ENCODE measurements at regions of chr4 and their contacts with region 1.

Region 1: DNA sequence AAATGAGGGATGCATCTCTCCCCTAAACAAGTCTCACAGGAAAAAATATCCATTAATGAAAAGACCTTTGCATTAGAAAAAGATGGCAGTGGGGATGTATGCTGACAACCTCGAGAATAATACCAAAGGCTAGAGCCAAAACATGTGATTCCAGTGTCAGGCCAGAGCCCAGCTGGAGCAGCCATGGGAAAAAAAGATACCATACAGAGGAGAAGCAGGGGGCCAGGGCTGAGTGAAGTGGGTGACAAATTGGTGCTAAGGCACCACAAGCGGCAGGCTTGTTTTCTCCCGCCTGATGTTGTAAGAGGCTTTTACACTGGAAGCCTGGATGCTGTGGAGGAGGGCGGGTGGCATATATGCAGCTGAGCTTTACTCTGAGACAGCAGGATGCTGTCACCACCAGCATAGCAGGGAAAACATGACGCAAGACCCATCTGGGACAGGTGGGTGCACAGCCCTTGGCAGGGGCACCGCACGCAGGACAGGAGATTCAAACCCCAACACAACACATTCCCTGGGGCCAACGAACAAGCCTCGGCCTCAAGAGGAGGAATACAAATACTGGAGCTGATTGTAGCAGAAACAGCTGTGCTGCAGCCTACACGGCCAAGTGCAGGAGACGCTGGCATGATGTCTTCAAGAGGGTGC is 91.9 kb downstream of the TSPAN5 start:
- DNase-seq: peak in 9 of 10 donors; percentile 53 to 87 (median 84)
- H3K4me3 ChIP-seq: peak overlapping the region in 41 of 59 donors; percentile 1 to 52 (median 23)
- H3K27ac ChIP-seq: peak overlapping the region; percentile 86 to 99 (median 95)
- H3K27me3 ChIP-seq: no peaks in the 10 kb centered on the region
- CTCF ChIP-seq: peak in 8 of 56 donors; percentile 5 to 36 (median 14)

Region 2: GRCh38 chr4:98260579-98261290 is 305.8 kb before region 1 on chr4:
- intact Hi-C with region 1: loop called in 1 of 2 experiments (anchors 5 kb)
- DNase-seq: peak; percentile 84 to 96 (median 92)
- H3K4me3 ChIP-seq: peak overlapping the region; percentile 67 to 96 (median 88)
- H3K27ac ChIP-seq: peak overlapping the region; percentile 89 to 99 (median 98)
- H3K27me3 ChIP-seq: no peaks in the 10 kb centered on the region
- CTCF ChIP-seq: peak in 12 of 56 donors; percentile 1 to 19 (median 10)

Region 3: GRCh38 chr4:98293104-98293887 is 273.2 kb before region 1 on chr4:
- intact Hi-C with region 1: loop called in 1 of 2 experiments (anchors 5 kb)
- DNase-seq: peak in 2 of 10 donors; percentile 5 to 11
- H3K4me3 ChIP-seq: peak overlapping the region in 44 of 59 donors; percentile 0 to 54 (median 24)
- H3K27ac ChIP-seq: peak overlapping the region; percentile 14 to 95 (median 83)
- H3K27me3 ChIP-seq: no peaks in the 10 kb centered on the region
- CTCF ChIP-seq: no peak

Region 4: DNA sequence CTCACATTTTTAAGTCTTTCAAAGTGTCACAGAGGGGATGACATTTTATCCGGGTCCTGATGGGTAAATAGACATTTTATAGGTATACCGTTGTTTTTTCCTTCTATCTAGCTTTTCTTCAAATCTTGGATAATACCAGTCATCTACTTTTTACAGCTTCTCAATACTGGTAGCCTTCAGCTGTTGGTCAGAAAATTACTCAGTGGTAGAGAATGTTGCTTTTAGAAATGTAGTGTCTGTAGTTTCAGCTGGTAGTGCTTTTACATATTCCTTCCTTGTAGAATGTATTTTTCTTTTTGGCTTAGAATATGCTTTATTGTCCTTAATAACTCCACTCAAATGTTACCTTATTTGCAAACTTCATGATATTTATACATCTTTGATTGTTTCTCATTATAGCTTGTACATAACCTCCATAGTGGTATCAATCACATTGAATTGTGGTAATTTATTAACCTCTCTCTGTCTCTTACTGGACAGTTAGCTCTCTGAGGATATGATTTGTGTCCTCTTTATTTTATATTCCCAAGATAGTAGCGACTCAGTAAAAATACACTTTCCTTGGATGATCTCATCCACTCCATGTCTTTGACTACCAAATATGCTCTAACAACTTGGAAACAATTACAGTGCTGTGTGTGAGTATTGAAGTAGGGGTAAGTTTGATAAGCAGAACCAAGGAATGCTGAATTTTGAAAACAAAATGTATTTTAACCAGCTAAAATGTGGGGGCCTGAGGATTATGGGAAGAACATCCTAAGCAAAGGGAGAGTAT is 251.5 kb before region 1 on chr4:
- intact Hi-C with region 1: no loop called
- DNase-seq: no peak
- H3K4me3 ChIP-seq: no peak overlapping the region
- H3K27ac ChIP-seq: no peak overlapping the region
- H3K27me3 ChIP-seq: no peaks in the 10 kb centered on the region
- CTCF ChIP-seq: no peak

Region 5: GRCh38 chr4:98586291-98586961 is 19.9 kb after region 1 on chr4:
- intact Hi-C with region 1: loop called in 1 of 2 experiments (anchors 1 kb)
- DNase-seq: no peak
- H3K4me3 ChIP-seq: peak overlapping the region in 55 of 59 donors; percentile 3 to 67 (median 45)
- H3K27ac ChIP-seq: peak overlapping the region in 58 of 59 donors; percentile 35 to 94 (median 87)
- H3K27me3 ChIP-seq: no peaks in the 10 kb centered on the region
- CTCF ChIP-seq: no peak

Region 6: GRCh38 chr4:98626350-98626749 is 59.9 kb after region 1 on chr4:
- intact Hi-C with region 1: loop called (anchors 5 kb)
- DNase-seq: peak in 2 of 10 donors; percentile 50 to 62
- H3K4me3 ChIP-seq: no peak overlapping the region
- H3K27ac ChIP-seq: peak overlapping the region; percentile 56 to 93 (median 83)
- H3K27me3 ChIP-seq: no peaks in the 10 kb centered on the region
- CTCF ChIP-seq: no peak

Region 7: GRCh38 chr4:98658287-98659105 is 92.0 kb after region 1 on chr4 and contains the start of gene TSPAN5:
- intact Hi-C with region 1: loop called (anchors 2 to 5 kb)
- DNase-seq: peak; percentile 56 to 90 (median 76)
- H3K4me3 ChIP-seq: peak within 1 kb of the TSS; percentile 59 to 96 (median 86)
- H3K27ac ChIP-seq: peak within 1 kb of the TSS; percentile 78 to 98 (median 94)
- H3K27me3 ChIP-seq: no peaks in the 10 kb centered on the region
- CTCF ChIP-seq: peak in 12 of 56 donors; percentile 3 to 35 (median 10)
- total RNA-seq, gene TSPAN5: 56.5 to 140 (median 109) TPM

Region 8: DNA sequence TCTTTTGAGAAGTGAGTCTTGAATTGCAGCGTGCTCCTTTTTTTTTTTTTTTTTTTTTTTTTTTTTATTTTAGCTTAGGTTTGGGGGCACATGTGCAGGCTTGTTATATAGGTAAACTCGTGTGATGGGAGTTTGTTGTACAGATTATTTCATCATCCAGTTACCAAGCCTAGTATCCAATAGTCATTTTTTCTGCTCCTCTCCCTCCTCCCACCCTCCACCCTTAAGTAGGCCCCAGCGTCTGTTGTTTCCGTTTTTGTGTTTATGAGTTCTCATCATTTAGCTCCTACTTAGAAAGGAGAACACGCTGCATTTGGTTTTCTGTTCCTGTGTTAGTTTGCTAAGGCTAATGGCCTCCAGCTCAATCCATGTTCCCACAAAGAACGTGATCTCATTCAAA is 173.3 kb after region 1 on chr4:
- intact Hi-C with region 1: no loop called
- DNase-seq: no peak
- H3K4me3 ChIP-seq: no peak overlapping the region
- H3K27ac ChIP-seq: no peak overlapping the region
- H3K27me3 ChIP-seq: no peaks in the 10 kb centered on the region
- CTCF ChIP-seq: no peak